PC-9 (cell line): ENCODE measurements at regions of chr7 and their contacts with region 1.

Region 1: DNA sequence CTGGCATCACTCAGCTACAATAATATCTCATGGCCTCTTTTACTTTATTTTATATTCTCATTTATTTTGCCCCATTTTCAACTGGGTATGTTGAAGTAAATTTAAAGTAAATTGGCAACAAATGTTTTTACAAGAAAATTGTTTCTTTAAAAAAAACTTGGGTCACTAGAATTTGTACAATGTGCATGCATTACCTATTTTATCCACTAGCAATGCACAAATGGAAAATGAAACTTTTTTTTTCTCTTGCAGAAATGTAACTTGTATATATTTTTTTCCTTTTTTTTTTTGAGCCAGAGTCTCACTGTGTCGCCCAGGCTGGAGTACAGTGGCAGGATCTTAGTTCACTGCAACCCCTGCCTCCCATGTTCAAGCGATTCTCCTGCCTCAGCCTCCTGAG is 10.3 kb upstream of the H2AZ2 start:
- DNase-seq: no peak
- H3K4me3 ChIP-seq: no peak overlapping the region
- H3K27ac ChIP-seq: no peak overlapping the region
- H3K4me1 ChIP-seq: peaks cover 11% of the 10 kb centered on the region
- H3K27me3 ChIP-seq: no peaks in the 10 kb centered on the region
- CTCF ChIP-seq: peak; percentile 41; the same call in 1 of the 2 replicates

Region 2: GRCh38 chr7:43735802-43736541 is 1122.2 kb before region 1 on chr7:
- CTCF ChIA-PET with region 1: no interaction called
- POLR2A ChIA-PET with region 1: no interaction called
- intact Hi-C with region 1: no loop called
- DNase-seq: no peak
- H3K4me3 ChIP-seq: no peak overlapping the region
- H3K27ac ChIP-seq: no peak overlapping the region
- H3K4me1 ChIP-seq: peaks cover 11% of the 10 kb centered on the region
- H3K27me3 ChIP-seq: no peaks in the 10 kb centered on the region
- CTCF ChIP-seq: no peak

Region 3: DNA sequence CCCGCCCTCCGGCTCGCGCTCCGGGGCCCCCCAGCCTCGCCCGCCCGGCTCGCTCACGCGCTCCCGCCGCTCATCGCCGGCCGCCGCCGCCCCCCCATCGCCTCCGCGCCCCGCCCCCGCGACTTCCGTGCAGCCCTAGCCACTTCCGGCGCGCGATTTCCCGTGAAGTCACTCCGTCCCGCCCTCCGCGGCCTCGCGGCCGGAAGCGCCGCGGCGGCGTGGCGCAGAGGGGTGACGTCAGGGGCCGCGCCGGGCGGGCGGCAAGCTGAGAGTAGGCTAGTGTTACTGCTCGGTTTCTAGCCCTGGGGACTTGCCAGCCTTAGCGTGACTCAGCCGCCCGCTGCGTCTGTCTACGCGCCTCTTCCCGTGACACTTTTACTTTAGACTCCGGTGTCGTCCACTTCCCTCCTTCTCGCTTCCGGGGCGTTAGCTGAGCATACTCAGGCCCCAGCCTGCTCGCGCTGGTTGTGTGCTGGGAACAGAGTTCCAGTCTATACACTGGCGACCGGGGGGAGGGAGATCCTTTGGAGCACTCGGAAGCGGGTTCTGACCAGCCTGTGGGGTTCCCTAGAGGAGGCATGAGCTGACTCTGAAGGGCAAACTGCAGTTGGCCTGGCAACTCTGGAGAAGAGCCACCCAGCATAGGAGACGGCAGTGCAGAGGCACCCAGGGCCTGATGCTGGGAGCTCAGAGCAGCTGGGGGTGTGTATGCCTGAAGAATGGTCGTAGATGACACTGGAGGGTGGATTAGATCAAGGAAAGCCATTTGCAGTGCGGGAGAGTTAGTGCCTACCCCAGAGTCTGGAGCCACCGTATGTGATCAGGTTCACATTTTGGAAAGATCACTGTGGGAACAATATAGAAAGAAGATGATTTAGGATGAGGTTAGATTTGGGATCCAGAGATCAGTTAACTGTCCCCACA is 27.5 kb after region 1 on chr7 and contains the start of gene PURB:
- CTCF ChIA-PET with region 1: interaction called, 14 read pairs
- POLR2A ChIA-PET with region 1: interaction called, 4 read pairs
- intact Hi-C with region 1: no loop called
- DNase-seq: peak; percentile 97 to 98
- H3K4me3 ChIP-seq: peak within 1 kb of the TSS; percentile 77
- H3K27ac ChIP-seq: peak within 1 kb of the TSS; percentile 96
- H3K4me1 ChIP-seq: peaks cover 44% of the 10 kb centered on the region
- H3K27me3 ChIP-seq: no peaks in the 10 kb centered on the region
- CTCF ChIP-seq: no peak
- total RNA-seq, gene PURB: 33.1 and 38.2 TPM in 2 replicates

Region 4: DNA sequence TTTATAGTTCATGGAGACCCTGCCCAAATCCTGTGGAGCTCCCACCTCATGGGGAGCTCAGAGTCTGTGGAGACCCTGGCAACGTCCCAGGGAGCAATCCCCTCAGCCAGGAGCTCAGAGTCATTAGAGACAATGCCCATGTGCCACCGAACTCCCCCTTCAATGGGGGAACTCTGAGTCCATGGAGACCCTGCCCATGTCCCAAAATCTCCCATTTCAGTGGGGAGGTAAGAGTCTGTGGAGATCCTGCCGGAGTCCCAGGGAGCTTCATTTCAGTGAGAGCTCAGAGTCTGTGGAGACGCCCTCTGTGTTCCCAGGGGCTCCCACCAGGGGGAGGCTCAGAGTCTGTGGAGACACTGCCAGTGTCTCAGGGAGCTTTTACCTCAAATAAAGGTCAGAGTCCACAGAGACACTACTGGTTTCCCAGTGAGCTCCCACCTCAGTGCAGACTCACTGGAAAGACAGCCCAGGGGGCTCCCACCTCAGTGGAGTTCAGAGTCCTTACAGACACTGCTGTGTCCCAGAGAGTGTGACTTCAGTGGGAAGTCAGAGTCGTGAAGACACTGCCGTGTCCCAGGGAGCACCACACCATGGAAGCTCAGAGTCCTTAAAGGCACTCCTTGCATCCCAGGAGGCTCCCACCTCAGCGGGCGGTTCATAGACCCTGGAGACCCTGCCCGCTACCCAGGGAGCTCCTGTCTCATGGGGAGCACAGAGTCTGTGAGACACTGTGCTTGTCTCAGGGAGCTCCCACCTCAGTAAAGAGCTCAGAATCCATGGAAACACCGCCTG is 115.6 kb after region 1 on chr7:
- CTCF ChIA-PET with region 1: interaction called, 10 read pairs
- POLR2A ChIA-PET with region 1: no interaction called
- intact Hi-C with region 1: no loop called
- DNase-seq: peak in 1 of 2 experiments; percentile 50
- H3K4me3 ChIP-seq: no peak overlapping the region
- H3K27ac ChIP-seq: no peak overlapping the region
- H3K4me1 ChIP-seq: no peaks in the 10 kb centered on the region
- H3K27me3 ChIP-seq: no peaks in the 10 kb centered on the region
- CTCF ChIP-seq: peak; percentile 66

Region 5: DNA sequence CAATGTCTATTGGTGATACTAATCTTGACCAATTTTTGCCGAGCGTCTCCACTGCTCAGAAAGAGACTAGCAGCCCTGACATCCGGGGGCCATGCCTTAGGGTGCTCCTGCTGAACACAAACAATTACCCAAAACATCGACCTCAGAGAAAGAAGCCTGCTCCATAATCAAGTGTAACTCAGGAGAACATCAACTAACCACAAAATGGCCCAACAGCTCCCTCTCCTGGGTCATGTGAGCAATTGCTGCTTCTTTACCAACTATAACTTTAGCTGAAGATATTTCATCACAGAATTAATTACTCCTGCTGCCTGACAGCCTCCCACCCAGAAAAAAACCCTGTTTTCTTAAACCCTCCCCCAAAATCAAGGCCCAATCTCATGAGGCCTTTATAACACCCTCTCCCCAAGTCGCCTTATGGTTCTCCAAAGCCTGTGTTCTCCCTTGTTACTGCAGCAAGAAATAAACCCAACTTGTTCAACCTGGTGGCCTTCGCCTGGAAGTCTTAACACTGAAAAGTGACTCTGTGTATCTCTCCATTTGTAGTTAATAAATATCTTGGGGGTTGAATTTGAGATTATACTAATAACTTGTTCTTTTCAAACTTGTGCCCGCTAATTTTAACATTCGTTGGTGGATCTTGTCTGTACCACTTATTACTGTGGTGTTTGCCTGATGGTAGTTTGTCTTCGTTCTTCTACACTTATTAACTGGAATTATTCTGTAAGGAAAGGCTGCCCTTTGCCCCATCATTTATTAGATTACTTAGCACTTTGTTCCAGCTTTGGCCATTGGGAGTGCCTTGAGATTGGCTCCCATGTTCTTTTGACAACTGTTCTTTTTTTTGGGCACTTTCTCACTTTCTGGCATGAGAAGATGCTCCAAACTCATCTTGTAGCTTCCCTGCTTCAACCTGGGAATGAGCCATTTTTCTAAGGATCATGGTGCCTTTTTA is 278.2 kb after region 1 on chr7:
- CTCF ChIA-PET with region 1: interaction called, 6 read pairs
- POLR2A ChIA-PET with region 1: no interaction called
- intact Hi-C with region 1: loop called (anchors 1 kb)
- DNase-seq: peak; percentile 63 to 74
- H3K4me3 ChIP-seq: no peak overlapping the region
- H3K27ac ChIP-seq: no peak overlapping the region
- H3K4me1 ChIP-seq: 0 out of 2 replicates have a peak, but pooled peaks cover 3% of the 10 kb centered on the region
- H3K27me3 ChIP-seq: no peaks in the 10 kb centered on the region
- CTCF ChIP-seq: peak; percentile 98

Region 6: DNA sequence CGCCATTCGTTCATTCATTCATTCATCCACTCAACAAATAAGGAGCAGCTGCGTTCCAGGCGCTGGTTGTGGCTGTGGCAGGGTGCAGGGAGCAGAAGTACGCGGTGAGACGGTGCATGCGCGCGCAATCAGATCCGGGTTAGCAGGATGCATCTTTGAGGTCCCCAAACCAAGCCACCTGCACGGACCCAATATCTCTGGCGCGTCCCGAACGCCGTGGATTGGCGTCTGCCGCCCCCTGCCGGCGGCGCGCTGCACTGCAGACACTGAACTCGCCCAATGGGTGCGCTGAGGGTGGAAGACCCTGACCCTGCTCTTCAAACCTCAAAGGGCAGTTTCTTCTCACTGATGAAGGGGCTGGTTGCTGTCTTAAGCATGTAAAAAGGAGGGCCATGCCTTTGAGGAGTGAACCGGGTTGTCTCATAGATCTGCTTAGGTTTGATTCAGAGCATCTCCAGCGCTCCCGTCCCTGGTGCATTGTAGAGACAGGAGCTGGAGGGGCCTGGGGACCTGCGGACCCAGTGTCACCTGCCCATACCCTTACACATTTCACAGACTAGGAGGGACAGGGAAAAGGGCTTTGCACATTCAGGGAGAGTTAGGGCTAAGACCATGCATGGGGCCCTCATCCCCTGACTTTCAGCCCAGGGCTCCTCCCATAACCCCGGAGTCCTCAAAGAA is 401.9 kb after region 1 on chr7:
- CTCF ChIA-PET with region 1: no interaction called
- POLR2A ChIA-PET with region 1: no interaction called
- intact Hi-C with region 1: loop called (anchors 10 kb)
- DNase-seq: peak in 1 of 2 experiments; percentile 62
- H3K4me3 ChIP-seq: no peak overlapping the region
- H3K27ac ChIP-seq: no peak overlapping the region
- H3K4me1 ChIP-seq: no peaks in the 10 kb centered on the region
- H3K27me3 ChIP-seq: peaks cover 64% of the 10 kb centered on the region
- CTCF ChIP-seq: peak; percentile 100